ENCODE measurements at regions of chr10 and their contacts with region 1.

Region 1: GRCh38 chr10:29304264-29305030 is 15.6 kb downstream of the LYZL1 start:
- DNase-seq: peak; percentile 65
- ATAC-seq: peak; percentile 79
- H3K4me3 Mint-ChIP-seq: no peak overlapping the region
- H3K27ac Mint-ChIP-seq: no peak overlapping the region
- H3K4me1 Mint-ChIP-seq: peaks cover 26% of the 10 kb centered on the region
- H3K27me3 Mint-ChIP-seq: no peaks in the 10 kb centered on the region
- CTCF ChIP-seq: peak; percentile 68

Region 2: DNA sequence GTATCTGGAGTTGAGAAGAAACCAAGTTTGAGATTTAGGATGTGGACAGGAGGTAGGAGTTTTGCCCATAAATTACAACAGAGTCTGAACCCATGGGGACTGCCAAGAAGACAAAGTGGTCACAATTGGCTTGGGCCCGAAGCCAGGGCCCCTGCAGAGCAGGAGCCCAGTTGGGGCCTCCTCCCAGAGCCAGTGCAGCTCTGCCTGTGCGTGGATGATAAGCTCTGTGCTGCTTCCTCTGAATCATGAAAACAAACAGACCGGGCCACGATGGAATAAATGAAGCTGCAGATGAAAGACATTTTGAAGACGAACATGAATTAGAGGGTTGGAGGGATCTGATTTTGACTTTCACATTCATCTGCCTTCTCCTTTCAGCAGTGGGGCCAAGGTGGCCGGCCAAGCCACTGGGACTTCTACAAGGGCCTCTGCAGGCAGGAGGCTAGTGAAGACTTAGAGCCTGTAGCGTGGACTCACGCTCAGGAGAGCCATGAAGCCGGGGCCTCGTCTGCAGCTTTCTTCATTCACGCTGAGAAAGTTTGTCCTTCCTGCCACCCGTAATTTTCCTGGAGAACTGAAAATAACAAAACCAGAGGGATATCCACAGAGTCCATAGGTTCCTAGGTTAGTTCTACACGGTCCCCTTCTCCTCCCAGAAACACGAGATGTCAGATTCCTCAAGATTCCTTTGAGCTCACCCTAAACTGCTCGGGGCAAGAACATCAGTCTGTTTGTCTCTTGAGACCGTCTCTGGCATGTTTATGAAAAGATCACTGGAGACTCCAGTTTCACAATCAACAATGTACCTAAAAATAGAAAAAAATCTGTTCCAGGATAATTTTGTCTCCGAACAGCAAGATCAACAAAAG is 172.3 kb before region 1 on chr10:
- CTCF ChIA-PET with region 1: interaction called, 22 read pairs
- POLR2A ChIA-PET with region 1: no interaction called
- DNase-seq: no peak
- ATAC-seq: no peak
- H3K4me3 Mint-ChIP-seq: no peak overlapping the region
- H3K27ac Mint-ChIP-seq: no peak overlapping the region
- H3K4me1 Mint-ChIP-seq: peaks cover 21% of the 10 kb centered on the region
- H3K27me3 Mint-ChIP-seq: no peaks in the 10 kb centered on the region; the same call in 1 of the 2 replicates
- CTCF ChIP-seq: no peak

Region 3: DNA sequence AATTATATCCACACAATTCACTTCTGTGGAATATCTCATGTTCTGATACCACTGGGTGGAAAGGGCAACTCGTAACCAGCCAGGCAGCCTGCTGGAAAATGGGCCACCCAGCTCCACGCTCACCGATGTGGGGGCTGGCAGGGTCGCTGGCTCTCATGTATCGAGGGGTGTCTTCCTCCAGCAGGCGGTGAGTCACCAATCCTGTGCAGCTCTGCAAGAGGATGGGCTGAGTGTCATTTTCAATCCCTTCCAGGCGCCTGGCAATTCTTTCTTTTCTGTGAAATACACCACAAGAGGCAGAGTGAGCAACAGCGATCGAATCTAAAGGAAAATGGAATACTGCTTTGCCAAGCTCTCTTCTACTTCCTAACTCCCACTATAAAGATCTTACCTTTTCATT is 250.2 kb after region 1 on chr10:
- CTCF ChIA-PET with region 1: no interaction called
- POLR2A ChIA-PET with region 1: no interaction called
- DNase-seq: no peak
- ATAC-seq: peak; percentile 40
- H3K4me3 Mint-ChIP-seq: no peak overlapping the region
- H3K27ac Mint-ChIP-seq: no peak overlapping the region
- H3K4me1 Mint-ChIP-seq: peaks cover 25% of the 10 kb centered on the region
- H3K27me3 Mint-ChIP-seq: no peaks in the 10 kb centered on the region
- CTCF ChIP-seq: no peak